ENCODE measurements at regions of chr2 and their contacts with region 1.

Region 1: DNA sequence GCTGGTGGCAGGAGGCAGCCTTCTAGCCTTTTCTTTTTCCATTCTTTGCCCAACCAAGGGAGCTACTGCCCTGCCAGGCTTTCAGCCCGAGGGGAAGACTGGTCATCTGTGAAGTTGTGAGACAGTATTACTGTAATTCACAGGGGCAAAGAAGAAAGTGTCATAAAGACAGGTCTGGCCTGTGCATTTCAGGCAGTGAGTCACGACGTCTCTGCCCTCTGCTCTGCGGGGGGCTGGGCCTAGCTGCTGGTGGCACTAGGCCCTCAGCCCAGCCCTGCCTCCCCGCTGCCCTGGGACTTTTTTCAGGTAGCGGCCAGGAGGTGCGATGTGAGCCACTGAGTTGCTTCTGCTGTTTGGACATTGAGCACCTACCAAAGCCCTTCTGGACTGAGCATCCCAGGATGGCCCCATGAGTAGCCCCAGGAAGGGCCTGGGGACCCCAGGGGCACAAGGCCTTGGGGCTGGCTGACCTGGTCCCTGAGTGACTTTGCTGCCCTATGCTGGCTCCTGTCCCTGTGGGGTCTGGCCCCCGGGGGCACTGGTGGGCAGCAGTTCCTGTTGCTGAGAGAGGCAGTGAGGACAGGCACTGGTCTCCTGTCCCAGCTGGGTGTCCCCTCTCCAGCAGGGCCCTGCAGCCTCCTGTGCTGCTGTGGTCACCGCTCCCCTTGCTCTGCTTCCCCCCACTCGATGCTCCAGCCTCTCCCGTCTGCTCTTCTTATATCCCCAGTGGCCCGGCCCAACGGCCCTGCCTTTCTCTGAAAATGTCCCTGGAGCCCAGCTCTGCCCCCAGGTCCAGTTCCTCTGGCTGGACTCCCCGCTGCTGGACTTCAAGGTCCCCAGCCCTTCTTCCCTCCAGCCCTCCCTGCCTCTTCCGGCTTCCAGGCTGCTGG is 7.0 kb downstream of the INHBB start:
- DNase-seq: no peak
- H3K4me3 ChIP-seq: no peak overlapping the region
- H3K27ac ChIP-seq: no peak overlapping the region
- H3K4me1 ChIP-seq: peaks cover 0 to 8% (median 2%) of the 10 kb centered on the region in 4 donors
- H3K27me3 ChIP-seq: peaks cover 0 to 52% (median 0%) of the 10 kb centered on the region in 3 donors
- CTCF ChIP-seq: no peak
- EP300 ChIP-seq: no peak
- POLR2A ChIP-seq: no peak

Region 2: GRCh38 chr2:120125177-120125576 is 227.8 kb before region 1 on chr2:
- intact Hi-C with region 1: no loop called
- DNase-seq: no peak
- H3K4me3 ChIP-seq: no peak overlapping the region
- H3K27ac ChIP-seq: no peak overlapping the region
- H3K4me1 ChIP-seq: no peaks in the 10 kb centered on the region
- H3K27me3 ChIP-seq: no peaks in the 10 kb centered on the region
- CTCF ChIP-seq: no peak
- EP300 ChIP-seq: no peak
- POLR2A ChIP-seq: no peak

Region 3: GRCh38 chr2:120470041-120470965 is 117.4 kb after region 1 on chr2:
- intact Hi-C with region 1: no loop called
- DNase-seq: peak; percentile 85 to 88
- H3K4me3 ChIP-seq: no peak overlapping the region
- H3K27ac ChIP-seq: peak overlapping the region; percentile 68 to 84 (median 82)
- H3K4me1 ChIP-seq: peaks cover 51 to 74% (median 57%) of the 10 kb centered on the region in 4 donors
- H3K27me3 ChIP-seq: no peaks in the 10 kb centered on the region
- CTCF ChIP-seq: no peak
- EP300 ChIP-seq: no peak
- POLR2A ChIP-seq: no peak

Region 4: DNA sequence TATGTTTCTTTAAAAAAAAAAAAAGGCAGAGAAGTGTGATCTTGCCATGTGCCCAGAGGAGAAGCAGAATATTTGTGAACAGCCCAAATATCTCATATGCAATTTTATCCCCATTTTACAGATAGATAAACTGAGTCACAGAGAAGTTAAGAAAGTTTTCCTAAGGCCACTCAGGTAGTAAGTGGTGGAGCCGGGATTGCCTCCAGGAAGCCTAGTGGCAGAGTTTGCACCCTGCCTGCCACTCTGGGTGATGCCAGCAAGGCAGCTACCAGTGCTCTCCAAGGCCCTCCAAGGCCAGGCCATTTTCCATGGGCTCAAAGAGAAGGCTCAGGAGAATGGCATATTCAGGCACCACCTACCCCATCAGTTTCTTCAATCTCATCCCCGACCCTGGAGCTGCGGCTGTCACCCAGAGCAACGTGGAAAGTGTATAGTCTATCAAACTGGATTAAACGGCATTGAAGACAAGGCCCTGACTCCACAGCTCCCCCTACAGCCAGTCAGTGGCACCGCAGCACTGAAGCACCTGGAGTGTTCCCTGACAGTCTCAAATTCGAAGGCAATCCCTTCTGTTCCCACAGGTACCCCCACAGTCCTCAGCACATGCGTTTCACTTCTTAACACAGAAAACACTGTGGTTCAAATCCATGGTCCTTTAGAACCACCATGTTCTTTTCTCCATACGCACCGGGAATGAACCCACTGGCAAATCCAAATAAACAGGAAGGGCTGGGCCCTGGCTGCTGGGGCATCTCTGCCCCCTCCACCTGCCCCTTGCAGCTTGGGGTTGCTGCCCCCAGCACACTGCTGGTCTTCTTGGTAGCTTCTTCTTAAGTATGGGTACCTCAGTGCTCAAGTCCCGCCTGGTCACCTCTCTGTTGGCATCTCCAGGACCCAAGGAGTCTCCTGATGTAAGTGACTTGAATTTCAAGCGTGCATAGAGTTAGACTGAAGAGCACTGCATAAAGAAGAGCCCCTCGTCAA is 168.3 kb after region 1 on chr2:
- intact Hi-C with region 1: loop called (anchors 10 kb)
- DNase-seq: peak; percentile 67 to 74
- H3K4me3 ChIP-seq: no peak overlapping the region
- H3K27ac ChIP-seq: no peak overlapping the region
- H3K4me1 ChIP-seq: peaks cover 0 to 15% (median 9%) of the 10 kb centered on the region in 4 donors
- H3K27me3 ChIP-seq: peaks cover 0 to 52% (median 13%) of the 10 kb centered on the region in 3 donors
- CTCF ChIP-seq: peak in 5 of 7 experiments; percentile 62 to 88 (median 68)
- EP300 ChIP-seq: no peak
- POLR2A ChIP-seq: no peak